Cardiac septum (tissue), 1 donor: ENCODE measurements at regions of chr9 and their contacts with region 1.

Region 1: GRCh38 chr9:136840140-136840687 is 2.1 kb upstream of the AJM1 start:
- DNase-seq: no peak

Region 2: DNA sequence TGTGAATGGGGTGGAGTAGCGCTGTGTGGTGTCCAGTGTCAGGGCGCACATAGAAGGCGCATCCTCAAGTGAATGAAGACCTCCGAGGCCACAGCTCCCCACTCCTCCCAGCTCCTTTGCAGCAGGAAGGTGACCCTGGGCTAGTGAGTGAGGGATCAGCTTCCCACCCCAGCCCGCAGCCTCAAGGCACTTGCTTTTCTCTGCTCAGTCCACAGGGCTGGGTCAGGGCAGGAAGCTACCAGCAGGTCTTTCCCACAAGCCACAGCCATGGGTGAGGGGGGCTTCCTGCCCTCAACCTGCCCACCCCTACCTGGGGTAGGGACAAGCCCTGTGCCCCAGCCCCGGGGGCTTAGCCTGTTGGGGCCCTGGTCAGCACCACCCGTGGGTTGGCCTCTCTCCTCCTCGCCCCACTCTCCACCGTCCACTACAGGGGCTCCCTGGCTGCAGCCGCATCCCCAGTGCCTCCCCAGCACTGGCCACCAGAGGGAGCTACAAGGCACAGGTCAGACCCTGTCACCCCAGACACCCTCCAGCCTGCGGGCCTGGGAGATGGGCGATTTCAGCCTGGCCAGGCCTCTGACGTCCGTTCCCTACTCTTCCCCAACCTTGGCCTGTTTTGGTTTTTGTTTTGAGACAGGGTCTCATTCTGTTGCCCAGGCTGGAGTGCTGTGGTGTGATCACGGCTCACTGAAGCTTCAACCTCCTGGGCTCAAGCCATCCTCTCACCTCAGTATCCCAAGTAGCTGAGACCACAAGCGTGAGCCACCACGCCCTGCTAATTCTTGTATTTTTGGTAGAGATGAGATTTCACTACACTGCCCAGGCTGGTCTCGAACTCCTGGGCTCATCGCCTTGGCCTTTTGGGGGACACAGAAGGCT is 189.1 kb after region 1 on chr9:
- intact Hi-C with region 1: loop called (anchors 5 kb)
- DNase-seq: peak; percentile 90